A673 (cell line): ENCODE measurements at regions of chr11 and their contacts with region 1.

Region 1: DNA sequence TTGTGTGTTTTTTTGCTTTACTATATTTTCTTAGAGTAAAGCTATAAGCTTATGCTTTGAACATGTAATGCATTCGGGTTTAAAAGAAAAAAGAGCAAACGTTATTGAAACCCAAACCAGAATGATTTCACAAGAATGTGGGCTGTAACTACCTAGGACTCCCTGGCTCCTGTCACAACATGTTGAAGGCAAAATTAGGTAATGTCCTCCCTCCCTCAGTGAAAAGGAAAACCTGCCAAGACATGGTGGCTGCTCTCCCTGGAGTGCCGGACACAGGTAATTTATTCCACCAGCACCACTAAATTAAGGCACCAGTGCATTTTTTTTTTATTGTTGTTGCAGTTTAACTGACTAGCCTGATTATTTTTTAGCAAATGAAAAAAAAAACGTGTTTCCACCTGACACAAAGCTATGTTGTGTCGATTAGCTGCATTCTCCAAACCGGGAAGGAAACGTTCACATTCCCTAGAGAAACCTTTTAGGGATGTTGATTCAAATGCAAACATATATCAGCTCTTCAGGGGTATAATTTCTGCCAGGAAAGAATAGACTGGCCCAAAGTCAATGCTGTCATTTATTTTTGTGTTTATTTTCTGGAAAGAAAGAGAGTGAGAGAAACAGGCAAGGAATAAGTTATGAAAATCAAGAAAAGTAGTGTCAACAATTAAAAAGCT is 134.6 kb downstream of the CCDC34 start:
- DNase-seq: no peak
- H3K4me3 ChIP-seq: no peak overlapping the region
- H3K27ac ChIP-seq: no peak overlapping the region
- H3K4me1 ChIP-seq: peaks cover 15% of the 10 kb centered on the region
- H3K27me3 ChIP-seq: no peaks in the 10 kb centered on the region
- CTCF ChIP-seq: no peak

Region 2: DNA sequence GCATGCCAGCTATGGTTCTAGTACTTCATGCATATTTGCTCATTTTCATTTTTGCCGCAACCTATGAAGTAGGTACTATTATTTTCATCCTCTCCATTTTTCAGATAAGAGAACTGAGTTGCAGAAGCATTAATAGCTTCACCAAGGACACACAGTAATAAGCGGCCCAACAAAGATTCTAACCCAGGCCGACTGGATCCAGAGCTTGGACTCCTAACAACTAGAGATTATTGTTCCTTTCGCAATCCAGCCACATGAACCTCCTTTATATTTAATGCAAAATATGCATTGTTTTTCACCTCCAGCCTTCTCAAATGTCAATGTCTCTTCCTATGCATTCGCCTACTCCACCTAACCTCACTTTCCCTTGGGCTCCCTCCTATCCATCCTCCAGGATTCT is 13.7 kb before region 1 on chr11:
- CTCF ChIA-PET with region 1: interaction called, 3 read pairs
- POLR2A ChIA-PET with region 1: no interaction called
- intact Hi-C with region 1: loop called (anchors 1 kb)
- DNase-seq: no peak
- H3K4me3 ChIP-seq: no peak overlapping the region
- H3K27ac ChIP-seq: peak overlapping the region; percentile 51
- H3K4me1 ChIP-seq: peaks cover 92% of the 10 kb centered on the region
- H3K27me3 ChIP-seq: no peaks in the 10 kb centered on the region
- CTCF ChIP-seq: no peak